ENCODE measurements at regions of chr1 and their contacts with region 1.

Region 1: DNA sequence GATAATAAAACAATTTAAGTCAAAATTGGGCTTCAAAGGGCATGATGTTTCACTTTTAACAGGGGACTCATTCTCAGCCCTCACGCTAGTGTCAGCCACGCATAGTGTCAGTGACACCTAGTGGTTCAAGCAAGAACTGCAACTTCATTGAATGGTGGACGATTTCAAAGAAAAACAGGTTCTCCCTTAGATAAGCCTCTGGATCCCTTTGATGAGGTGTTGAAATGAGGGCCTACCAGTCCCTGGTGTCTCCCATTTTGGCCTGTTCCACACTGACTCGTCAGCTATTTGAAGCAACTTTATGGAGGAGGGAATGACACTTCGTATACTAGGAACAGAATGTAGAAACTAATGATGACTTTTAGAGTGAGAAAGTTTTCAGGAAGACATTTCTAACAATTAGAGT is 56.2 kb downstream of the FCRL5 start:
- DNase-seq: peak; percentile 51
- H3K4me3 ChIP-seq: no peak overlapping the region
- H3K27ac ChIP-seq: no peak overlapping the region
- H3K4me1 ChIP-seq: no peaks in the 10 kb centered on the region
- H3K27me3 ChIP-seq: peaks cover 3 to 8% of the 10 kb centered on the region in 2 experiments
- CTCF ChIP-seq: peak; percentile 71 to 73
- POLR2A ChIP-seq: no peak

Region 2: GRCh38 chr1:157193702-157194391 is 302.3 kb before region 1 on chr1:
- CTCF ChIA-PET with region 1: interaction called, 35 read pairs
- POLR2A ChIA-PET with region 1: no interaction called
- dilution Hi-C with region 1: no loop called
- intact Hi-C with region 1: loop called (anchors 1 kb)
- DNase-seq: peak; percentile 61
- H3K4me3 ChIP-seq: no peak overlapping the region
- H3K27ac ChIP-seq: no peak overlapping the region
- H3K4me1 ChIP-seq: no peaks in the 10 kb centered on the region
- H3K27me3 ChIP-seq: peaks cover 17% of the 10 kb centered on the region in 2 experiments
- CTCF ChIP-seq: peak; percentile 73 to 75
- POLR2A ChIP-seq: no peak

Region 3: GRCh38 chr1:157312082-157312812 is 183.9 kb before region 1 on chr1:
- CTCF ChIA-PET with region 1: no interaction called
- POLR2A ChIA-PET with region 1: no interaction called
- dilution Hi-C with region 1: no loop called
- intact Hi-C with region 1: loop called (anchors 5 kb)
- DNase-seq: peak; percentile 31
- H3K4me3 ChIP-seq: no peak overlapping the region
- H3K27ac ChIP-seq: no peak overlapping the region
- H3K4me1 ChIP-seq: no peaks in the 10 kb centered on the region
- H3K27me3 ChIP-seq: peaks cover 0 to 2% of the 10 kb centered on the region in 2 experiments
- CTCF ChIP-seq: no peak
- POLR2A ChIP-seq: no peak

Region 4: GRCh38 chr1:157363660-157364140 is 132.4 kb before region 1 on chr1:
- CTCF ChIA-PET with region 1: interaction called, 57 read pairs
- POLR2A ChIA-PET with region 1: no interaction called
- dilution Hi-C with region 1: no loop called
- intact Hi-C with region 1: no loop called
- DNase-seq: peak; percentile 45
- H3K4me3 ChIP-seq: no peak overlapping the region
- H3K27ac ChIP-seq: no peak overlapping the region
- H3K4me1 ChIP-seq: no peaks in the 10 kb centered on the region
- H3K27me3 ChIP-seq: peaks cover 0 to 2% of the 10 kb centered on the region in 2 experiments
- CTCF ChIP-seq: peak; percentile 46 to 79
- POLR2A ChIP-seq: no peak